Activated naive CD4-positive, alpha-beta T cell treated with anti-CD3 and anti-CD28 coated beads for 36 hours (primary cell): ENCODE measurements at regions of chr2 and their contacts with region 1.

Region 1: GRCh38 chr2:61016808-61017555 is 538 bp upstream of the PEX13 start:
- DNase-seq: peak; percentile 82
- H3K4me3 Mint-ChIP-seq: peak overlapping the region; percentile 98
- H3K27ac Mint-ChIP-seq: peak overlapping the region; percentile 95
- H3K4me1 Mint-ChIP-seq: peaks cover 43% of the 10 kb centered on the region
- H3K27me3 Mint-ChIP-seq: no peaks in the 10 kb centered on the region

Region 2: GRCh38 chr2:60976875-60977561 is 40.0 kb before region 1 on chr2:
- CTCF ChIA-PET with region 1: no interaction called
- intact Hi-C with region 1: loop called (anchors 2 kb)
- DNase-seq: peak; percentile 48
- H3K4me3 Mint-ChIP-seq: no peak overlapping the region
- H3K27ac Mint-ChIP-seq: peak overlapping the region; percentile 69
- H3K4me1 Mint-ChIP-seq: peaks cover 53% of the 10 kb centered on the region
- H3K27me3 Mint-ChIP-seq: no peaks in the 10 kb centered on the region

Region 3: DNA sequence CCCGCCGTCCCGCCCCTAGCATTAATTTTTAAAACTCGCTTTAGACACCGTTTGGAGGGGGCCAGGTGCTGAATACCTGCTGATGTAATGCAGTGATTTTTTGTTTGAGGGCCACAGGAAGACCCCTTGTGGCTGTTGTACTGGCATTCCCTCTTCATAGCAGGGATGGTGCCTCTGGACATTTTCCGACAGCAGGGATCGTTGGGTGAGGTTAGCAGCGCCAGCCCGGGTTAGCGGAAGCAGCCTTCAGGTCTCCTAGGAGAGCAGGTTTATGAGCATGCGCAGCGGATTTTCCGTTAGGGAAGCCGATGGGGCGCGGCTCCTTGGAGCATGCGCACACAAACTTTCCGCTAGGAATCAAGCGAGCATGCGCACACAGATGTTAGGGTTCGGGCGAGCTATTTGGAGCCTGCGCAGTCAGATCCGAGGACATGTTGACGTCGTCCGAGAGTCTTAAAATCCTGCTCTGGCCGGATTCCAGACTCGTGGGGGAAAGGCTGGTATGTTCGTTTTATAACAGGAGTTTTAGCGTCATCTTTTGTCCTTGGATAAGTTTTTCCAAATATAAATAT is 127.8 kb after region 1 on chr2:
- CTCF ChIA-PET with region 1: no interaction called
- intact Hi-C with region 1: loop called (anchors 1 kb)
- DNase-seq: peak; percentile 97
- H3K4me3 Mint-ChIP-seq: peak overlapping the region; percentile 92
- H3K27ac Mint-ChIP-seq: peak overlapping the region; percentile 85
- H3K4me1 Mint-ChIP-seq: peaks cover 6% of the 10 kb centered on the region
- H3K27me3 Mint-ChIP-seq: no peaks in the 10 kb centered on the region

Region 4: GRCh38 chr2:61658841-61659780 is 642.1 kb after region 1 on chr2:
- CTCF ChIA-PET with region 1: no interaction called
- intact Hi-C with region 1: loop called (anchors 5 kb)
- DNase-seq: no peak
- H3K4me3 Mint-ChIP-seq: no peak overlapping the region
- H3K27ac Mint-ChIP-seq: no peak overlapping the region
- H3K4me1 Mint-ChIP-seq: no peaks in the 10 kb centered on the region
- H3K27me3 Mint-ChIP-seq: no peaks in the 10 kb centered on the region